GM12878 (cell line): ENCODE measurements at regions of chr2 and their contacts with region 1.

Region 1: GRCh38 chr2:197777823-197778407 is 7.2 kb downstream of the BOLL start:
- DNase-seq: peak; percentile 12
- ATAC-seq: no peak
- H3K4me3 ChIP-seq: no peak overlapping the region
- H3K27ac ChIP-seq: no peak overlapping the region
- H3K4me1 ChIP-seq: no peaks in the 10 kb centered on the region
- H3K27me3 ChIP-seq: no peaks in the 10 kb centered on the region
- CTCF ChIP-seq: peak; percentile 47 to 69 (median 50); a peak in 4 of 6 replicates
- EP300 ChIP-seq: no peak
- POLR2A ChIP-seq: no peak
- RAD21 ChIP-seq: peak; percentile 85

Region 2: GRCh38 chr2:197383823-197384222 is 394.1 kb before region 1 on chr2:
- CTCF ChIA-PET with region 1: interaction called, 7 read pairs
- POLR2A ChIA-PET with region 1: interaction called, 3 read pairs
- RAD21 ChIA-PET with region 1: interaction called, 7 read pairs
- SMC1A ChIA-PET with region 1: interaction called, 14 read pairs
- in situ Hi-C with region 1: no loop called
- intact Hi-C with region 1: loop called (anchors 2 kb)
- DNase-seq: no peak
- ATAC-seq: peak; percentile 36; the same call in 2 of the 3 replicates
- H3K4me3 ChIP-seq: no peak overlapping the region
- H3K27ac ChIP-seq: no peak overlapping the region
- H3K4me1 ChIP-seq: no peaks in the 10 kb centered on the region
- H3K27me3 ChIP-seq: no peaks in the 10 kb centered on the region; a peak in 1 of 4 replicates
- CTCF ChIP-seq: peak in 2 of 3 experiments; percentile 7 to 18; a peak in 1 of 6 replicates
- EP300 ChIP-seq: no peak
- POLR2A ChIP-seq: no peak
- RAD21 ChIP-seq: 0 out of 2 replicates have a peak, but pooled peaks have one; percentile 9

Region 3: DNA sequence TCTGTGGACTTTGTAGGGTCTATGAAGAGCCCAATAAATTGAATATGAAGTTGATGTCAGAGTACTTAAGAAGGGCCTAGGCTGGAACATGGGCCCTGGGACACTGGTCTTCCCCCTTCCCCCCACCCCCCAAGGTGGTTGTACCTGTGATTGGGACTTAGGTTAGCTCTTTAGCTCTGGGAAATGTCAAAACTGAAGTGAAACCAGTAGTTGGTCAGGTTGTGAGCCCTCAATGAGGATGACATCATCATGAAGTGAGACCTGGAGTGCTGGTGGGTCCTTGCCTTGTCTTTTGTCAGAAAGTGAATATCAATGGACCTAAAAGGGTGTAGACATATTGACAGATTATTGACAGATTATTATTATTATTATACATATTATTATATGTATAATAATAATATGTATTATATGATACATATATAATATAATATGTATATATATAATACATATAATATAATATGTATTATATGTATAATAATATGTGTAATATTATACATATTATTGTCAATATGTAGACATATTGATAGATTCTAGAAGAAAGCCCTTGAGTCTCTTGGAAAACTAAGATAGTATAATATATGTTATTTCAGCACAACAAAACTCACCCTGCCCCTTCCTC is 67.4 kb before region 1 on chr2:
- CTCF ChIA-PET with region 1: interaction called, 60 read pairs
- POLR2A ChIA-PET with region 1: interaction called, 5 read pairs
- RAD21 ChIA-PET with region 1: interaction called, 21 read pairs
- SMC1A ChIA-PET with region 1: interaction called, 58 read pairs
- in situ Hi-C with region 1: loop called (anchors 5 kb)
- intact Hi-C with region 1: loop called (anchors 1 kb)
- DNase-seq: peak; percentile 62
- ATAC-seq: peak; percentile 81
- H3K4me3 ChIP-seq: no peak overlapping the region
- H3K27ac ChIP-seq: no peak overlapping the region
- H3K4me1 ChIP-seq: peaks cover 19% of the 10 kb centered on the region
- H3K27me3 ChIP-seq: no peaks in the 10 kb centered on the region
- CTCF ChIP-seq: no peak
- EP300 ChIP-seq: peak in 1 of 2 experiments; percentile 87; a peak in 2 of 4 replicates
- POLR2A ChIP-seq: no peak
- RAD21 ChIP-seq: no peak

Region 4: DNA sequence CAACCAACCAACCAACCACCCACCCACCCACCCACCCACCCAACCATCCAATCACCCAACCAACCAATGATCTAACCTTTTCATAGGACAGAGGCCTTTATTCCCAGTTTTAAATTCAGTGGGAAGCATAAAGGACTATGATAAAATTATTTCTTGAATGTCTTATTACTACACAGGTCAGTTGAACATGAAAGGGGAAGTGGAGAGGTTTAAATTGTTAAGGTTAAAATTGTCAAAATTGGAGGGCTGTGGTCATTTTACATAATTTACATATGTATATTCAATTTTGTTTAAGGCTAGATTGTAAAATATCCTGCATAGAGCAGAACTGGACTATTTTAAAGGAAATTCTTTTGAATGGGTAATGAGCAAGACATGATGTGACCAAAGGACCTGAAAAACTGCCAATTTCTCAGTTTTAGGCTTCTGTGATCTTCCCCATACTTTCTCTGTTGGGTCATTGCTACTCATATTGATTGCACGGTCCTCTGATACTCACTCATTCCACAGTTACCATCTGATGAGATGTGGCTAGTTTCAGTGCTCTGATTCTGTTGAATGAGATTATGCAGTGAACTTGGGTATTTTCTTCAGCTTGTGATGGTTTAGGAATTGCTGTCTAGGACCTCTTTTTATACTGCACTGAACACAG is 153.9 kb after region 1 on chr2:
- CTCF ChIA-PET with region 1: no interaction called
- POLR2A ChIA-PET with region 1: no interaction called
- RAD21 ChIA-PET with region 1: no interaction called
- SMC1A ChIA-PET with region 1: no interaction called
- in situ Hi-C with region 1: no loop called
- intact Hi-C with region 1: no loop called
- DNase-seq: no peak
- ATAC-seq: peak; percentile 80
- H3K4me3 ChIP-seq: no peak overlapping the region
- H3K27ac ChIP-seq: no peak overlapping the region
- H3K4me1 ChIP-seq: no peaks in the 10 kb centered on the region
- H3K27me3 ChIP-seq: no peaks in the 10 kb centered on the region
- CTCF ChIP-seq: no peak
- EP300 ChIP-seq: peak in 1 of 2 experiments; percentile 16; a peak in 1 of 4 replicates
- POLR2A ChIP-seq: no peak
- RAD21 ChIP-seq: no peak

Region 5: DNA sequence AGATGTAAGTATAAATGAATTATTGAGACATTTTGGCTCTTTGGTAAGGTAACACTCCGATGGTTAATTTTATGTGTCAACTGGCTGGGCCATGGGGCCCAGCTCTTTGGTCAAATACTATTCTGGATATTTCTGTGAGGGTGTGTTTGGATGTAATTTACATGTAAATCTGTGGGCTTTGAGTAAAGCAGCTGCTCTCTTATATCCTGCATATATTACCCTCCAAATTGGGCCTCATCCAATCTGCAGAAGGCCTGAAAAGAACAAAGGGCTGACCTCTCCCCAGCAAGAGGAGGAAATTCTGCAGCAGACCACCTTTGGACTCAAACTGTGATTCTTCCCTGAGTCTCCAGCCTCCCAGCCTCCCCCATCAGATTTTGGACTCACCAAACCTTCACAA is 490.6 kb after region 1 on chr2:
- CTCF ChIA-PET with region 1: no interaction called
- POLR2A ChIA-PET with region 1: no interaction called
- RAD21 ChIA-PET with region 1: no interaction called
- SMC1A ChIA-PET with region 1: no interaction called
- in situ Hi-C with region 1: no loop called
- intact Hi-C with region 1: no loop called
- DNase-seq: no peak
- ATAC-seq: no peak
- H3K4me3 ChIP-seq: no peak overlapping the region
- H3K27ac ChIP-seq: no peak overlapping the region
- H3K4me1 ChIP-seq: no peaks in the 10 kb centered on the region
- H3K27me3 ChIP-seq: no peaks in the 10 kb centered on the region
- CTCF ChIP-seq: no peak
- EP300 ChIP-seq: no peak
- POLR2A ChIP-seq: no peak
- RAD21 ChIP-seq: no peak